Breast epithelium (tissue), 4 donors: ENCODE measurements at regions of chr19 and their contacts with region 1.

Region 1: DNA sequence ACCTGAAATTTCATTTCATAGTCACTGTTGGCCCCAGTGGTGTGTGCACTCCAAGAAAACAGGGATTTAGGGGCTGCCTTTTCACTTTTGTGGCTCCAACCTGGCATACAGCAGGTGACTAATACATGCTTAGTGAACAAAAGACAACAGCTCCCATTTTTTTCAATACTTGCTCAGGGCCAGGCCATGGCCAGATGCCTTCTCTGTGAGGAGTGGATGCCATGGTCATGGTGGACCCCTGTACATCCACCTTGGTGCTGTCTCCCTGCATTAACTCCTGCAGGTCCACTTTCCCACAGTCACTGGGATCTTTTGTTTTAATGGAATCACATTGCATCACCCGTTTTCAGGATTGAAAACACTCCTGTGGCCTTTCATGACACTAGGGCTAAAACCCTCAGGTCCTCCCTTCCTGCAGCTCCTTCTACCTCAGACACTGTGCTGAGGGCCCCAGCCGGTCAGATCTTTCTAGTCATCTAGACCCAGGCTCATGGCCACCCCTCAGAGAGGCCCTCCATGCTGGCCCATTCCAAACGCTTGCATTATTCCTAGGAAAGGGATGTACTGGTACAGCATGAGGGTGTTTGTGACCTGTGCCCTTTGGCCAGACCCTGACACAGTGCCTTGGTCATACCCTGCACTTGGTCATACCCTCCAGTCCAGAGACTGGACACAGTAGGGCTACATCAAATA is 1.2 kb upstream of the TMEM147 start:
- DNase-seq: no peak
- H3K4me3 ChIP-seq: peak overlapping the region; percentile 87 to 97 (median 89)
- H3K27ac ChIP-seq: peak overlapping the region in 1 of 2 donors; percentile 84
- H3K4me1 ChIP-seq: peaks cover 0 to 3% of the 10 kb centered on the region in 2 donors
- H3K27me3 ChIP-seq: no peaks in the 10 kb centered on the region
- CTCF ChIP-seq: no peak
- POLR2A ChIP-seq: no peak

Region 2: DNA sequence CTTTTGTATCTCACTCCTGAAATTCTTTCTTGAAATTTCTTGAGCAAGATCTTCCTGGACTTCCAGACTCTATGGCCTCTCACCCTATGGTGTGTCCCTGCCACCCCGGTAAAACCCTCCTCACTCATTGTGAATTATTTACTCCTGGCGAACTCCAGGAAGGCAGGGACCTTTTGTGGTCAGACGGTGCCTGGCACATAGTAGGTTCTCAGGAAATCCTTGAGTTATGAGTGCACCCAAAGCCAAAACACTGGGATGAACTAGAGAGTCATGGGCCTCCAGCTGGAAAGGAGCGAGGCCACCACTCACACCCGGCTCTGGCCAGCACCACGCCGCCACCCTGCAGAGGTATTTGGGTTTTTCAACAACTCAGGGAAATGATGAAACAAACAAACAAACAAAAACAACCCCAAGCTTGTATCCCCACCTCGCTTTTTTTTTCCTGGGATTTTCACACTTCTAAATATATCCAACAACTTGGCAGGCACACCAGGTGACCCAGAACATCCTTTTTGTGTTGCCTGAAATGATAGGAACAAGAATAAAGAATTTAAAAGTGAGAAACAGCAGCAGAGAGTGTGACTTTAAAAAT is 491.6 kb before region 1 on chr19:
- intact Hi-C with region 1: loop called (anchors 5 kb)
- DNase-seq: no peak
- H3K4me3 ChIP-seq: no peak overlapping the region
- H3K27ac ChIP-seq: no peak overlapping the region
- H3K4me1 ChIP-seq: no peaks in the 10 kb centered on the region
- H3K27me3 ChIP-seq: no peaks in the 10 kb centered on the region
- CTCF ChIP-seq: no peak
- POLR2A ChIP-seq: no peak

Region 3: GRCh38 chr19:35458731-35459391 is 85.4 kb before region 1 on chr19:
- intact Hi-C with region 1: no loop called
- DNase-seq: no peak
- H3K4me3 ChIP-seq: no peak overlapping the region
- H3K27ac ChIP-seq: peak overlapping the region; percentile 33 to 76
- H3K4me1 ChIP-seq: no peaks in the 10 kb centered on the region
- H3K27me3 ChIP-seq: no peaks in the 10 kb centered on the region
- CTCF ChIP-seq: no peak
- POLR2A ChIP-seq: no peak

Region 4: DNA sequence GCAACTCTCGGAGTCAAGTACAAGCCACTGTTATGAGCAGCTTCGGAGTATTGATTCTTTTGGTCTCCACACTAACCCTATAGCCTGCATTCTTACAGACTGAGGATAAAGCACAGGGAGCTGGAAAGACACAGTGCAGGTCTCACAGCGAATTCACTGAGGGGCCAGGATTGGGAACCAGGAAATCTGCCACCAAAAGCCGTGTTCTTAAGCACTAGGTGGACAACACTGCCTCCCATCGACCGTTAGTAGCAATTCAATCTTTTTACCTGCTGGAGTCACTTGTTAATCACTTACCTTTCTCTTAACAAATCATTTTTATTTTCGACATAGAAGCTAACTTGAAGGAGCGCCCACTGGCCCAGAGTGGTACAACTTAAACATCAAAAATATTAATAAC is 48.0 kb after region 1 on chr19:
- intact Hi-C with region 1: no loop called
- DNase-seq: no peak
- H3K4me3 ChIP-seq: no peak overlapping the region
- H3K27ac ChIP-seq: no peak overlapping the region
- H3K4me1 ChIP-seq: no peaks in the 10 kb centered on the region
- H3K27me3 ChIP-seq: peaks cover 0 to 4% of the 10 kb centered on the region in 2 donors
- CTCF ChIP-seq: peak in 2 of 3 donors; percentile 33 to 34
- POLR2A ChIP-seq: no peak